ENCODE measurements at regions of chr1 and their contacts with region 1.

Region 1: DNA sequence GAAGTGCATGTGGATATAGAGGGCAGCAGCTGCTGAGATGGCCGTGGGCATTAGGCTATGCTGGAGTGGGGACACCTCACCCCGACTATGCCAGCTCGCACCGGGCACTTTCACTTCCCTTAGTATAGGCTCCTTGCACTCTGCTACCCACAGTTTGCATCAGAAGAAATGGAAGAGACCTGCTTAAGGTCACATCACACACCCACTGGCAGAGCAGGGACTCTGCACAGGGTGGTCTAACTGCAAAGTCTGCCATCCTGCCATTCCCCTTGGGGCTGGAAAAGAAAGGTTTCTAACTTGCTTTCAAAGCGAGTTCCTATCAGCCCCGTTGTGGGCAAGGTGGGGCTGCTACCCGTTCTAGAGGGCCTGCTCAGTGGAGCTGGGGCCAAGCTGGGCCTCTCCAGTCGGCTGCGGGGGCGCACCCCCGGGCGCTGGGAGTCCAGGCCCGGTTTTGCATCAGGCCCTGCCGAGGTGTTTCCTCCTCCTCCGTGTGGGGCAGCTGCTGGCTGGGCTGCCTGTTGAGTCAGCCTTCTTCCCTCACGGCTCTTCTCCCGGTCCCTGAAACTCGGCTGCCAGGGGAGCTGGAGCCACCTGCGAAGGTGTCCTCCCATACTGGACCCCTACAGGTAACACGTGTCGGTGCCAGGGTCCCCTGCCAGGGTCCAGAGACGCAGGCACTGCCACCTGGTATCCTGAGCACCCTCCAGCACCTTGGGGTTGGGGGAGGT is at the start of gene SYTL1:
- DNase-seq: peak; percentile 63
- H3K4me3 Mint-ChIP-seq: peak within 1 kb of the TSS; percentile 93
- H3K27ac Mint-ChIP-seq: peak within 1 kb of the TSS; percentile 99
- H3K4me1 Mint-ChIP-seq: peaks cover 59% of the 10 kb centered on the region
- H3K27me3 Mint-ChIP-seq: no peaks in the 10 kb centered on the region
- total RNA-seq, gene SYTL1: 24.4 and 26.3 TPM in 2 replicates

Region 2: DNA sequence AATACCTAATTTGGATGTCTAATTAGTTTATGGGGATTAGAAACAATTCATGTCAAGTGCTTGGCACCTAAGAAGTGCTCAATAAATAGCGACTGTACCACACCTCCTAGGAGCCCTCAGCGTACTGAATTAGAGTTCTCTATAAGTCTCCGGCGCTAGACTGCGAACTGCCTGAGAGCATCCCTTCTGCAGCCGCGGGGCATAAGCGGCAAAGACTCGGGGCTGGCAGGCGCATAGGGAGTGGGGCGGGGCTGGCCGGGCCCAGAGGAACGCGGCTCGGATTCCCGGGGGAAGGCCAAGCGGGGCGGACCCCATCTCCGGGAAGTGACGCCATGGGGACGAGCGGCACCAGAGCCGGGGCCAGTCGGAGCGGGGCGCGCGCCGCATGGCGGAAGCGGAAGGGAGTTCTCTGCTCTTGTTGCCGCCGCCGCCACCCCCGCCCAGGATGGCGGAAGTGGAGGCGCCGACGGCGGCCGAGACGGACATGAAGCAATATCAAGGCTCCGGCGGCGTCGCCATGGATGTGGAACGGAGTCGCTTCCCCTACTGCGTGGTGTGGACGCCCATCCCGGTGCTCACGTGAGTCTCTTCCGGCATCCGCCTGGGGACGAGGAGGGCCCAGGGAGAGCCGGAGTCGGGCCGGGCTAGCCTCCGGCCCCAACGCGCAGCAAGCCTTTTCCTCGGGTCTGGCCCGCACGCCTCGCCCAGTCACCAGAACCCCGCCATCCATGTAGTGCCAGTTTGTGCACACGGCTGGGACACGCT is 19.7 kb before region 1 on chr1 and contains the start of gene TMEM222:
- intact Hi-C with region 1: loop called (anchors 1 kb)
- DNase-seq: peak; percentile 98
- H3K4me3 Mint-ChIP-seq: peak within 1 kb of the TSS; percentile 97
- H3K27ac Mint-ChIP-seq: peak within 1 kb of the TSS; percentile 90
- H3K4me1 Mint-ChIP-seq: peaks cover 33% of the 10 kb centered on the region
- H3K27me3 Mint-ChIP-seq: no peaks in the 10 kb centered on the region
- total RNA-seq, gene TMEM222: 44.3 and 47.4 TPM in 2 replicates